ENCODE measurements at regions of chr19 and their contacts with region 1.

Region 1: DNA sequence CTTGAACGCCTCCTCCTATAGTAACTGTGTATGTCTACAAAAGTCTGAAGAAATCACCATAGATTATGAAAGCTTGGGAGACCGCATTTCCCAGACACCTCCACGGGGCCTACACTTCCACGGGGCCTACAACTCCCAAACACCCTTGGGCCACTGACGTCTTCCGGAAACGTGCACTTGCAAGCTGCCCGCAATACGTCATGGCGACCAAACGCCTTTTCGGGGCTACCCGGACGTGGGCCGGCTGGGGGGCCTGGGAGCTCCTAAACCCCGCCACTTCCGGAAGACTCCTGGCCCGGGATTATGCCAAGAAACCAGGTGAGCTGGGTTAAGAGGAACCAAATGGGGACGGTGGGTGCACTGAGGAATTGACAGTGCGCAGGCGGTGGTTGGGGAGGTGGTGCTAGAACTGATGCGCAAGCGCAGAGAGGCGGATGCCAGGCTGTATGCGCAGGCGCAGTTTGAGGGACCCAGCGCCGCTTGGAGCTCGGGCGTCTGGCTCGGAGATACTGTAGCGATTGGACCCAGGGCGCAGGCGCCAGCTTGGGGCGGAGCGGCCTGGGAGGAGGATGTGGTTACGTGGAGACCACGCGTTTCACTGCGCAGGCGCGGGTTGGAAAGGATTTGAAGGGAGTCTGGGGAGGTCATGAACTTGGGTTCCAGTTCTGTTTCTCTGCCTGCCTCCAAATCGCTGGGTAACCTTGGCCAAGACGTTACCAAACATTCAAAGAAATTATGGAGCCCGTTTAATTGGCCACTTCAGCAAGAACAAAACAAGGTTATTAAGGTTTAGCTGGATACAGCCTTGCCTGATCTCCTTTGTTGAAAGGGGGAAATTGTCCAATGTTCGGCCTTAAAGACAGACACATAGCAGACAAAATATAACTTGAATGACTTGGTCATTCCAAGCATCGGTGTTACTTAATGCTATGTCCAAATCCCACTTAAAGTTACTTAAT is at the start of gene MRPL54:
- DNase-seq: peak; percentile 100
- ATAC-seq: peak; percentile 86
- H3K4me3 Mint-ChIP-seq: peak within 1 kb of the TSS; percentile 95
- H3K27ac Mint-ChIP-seq: peak within 1 kb of the TSS; percentile 100
- H3K4me1 Mint-ChIP-seq: peaks cover 41% of the 10 kb centered on the region
- H3K27me3 Mint-ChIP-seq: peaks cover 3% of the 10 kb centered on the region
- total RNA-seq, gene MRPL54: 74.0 to 89.8 TPM

Region 2: DNA sequence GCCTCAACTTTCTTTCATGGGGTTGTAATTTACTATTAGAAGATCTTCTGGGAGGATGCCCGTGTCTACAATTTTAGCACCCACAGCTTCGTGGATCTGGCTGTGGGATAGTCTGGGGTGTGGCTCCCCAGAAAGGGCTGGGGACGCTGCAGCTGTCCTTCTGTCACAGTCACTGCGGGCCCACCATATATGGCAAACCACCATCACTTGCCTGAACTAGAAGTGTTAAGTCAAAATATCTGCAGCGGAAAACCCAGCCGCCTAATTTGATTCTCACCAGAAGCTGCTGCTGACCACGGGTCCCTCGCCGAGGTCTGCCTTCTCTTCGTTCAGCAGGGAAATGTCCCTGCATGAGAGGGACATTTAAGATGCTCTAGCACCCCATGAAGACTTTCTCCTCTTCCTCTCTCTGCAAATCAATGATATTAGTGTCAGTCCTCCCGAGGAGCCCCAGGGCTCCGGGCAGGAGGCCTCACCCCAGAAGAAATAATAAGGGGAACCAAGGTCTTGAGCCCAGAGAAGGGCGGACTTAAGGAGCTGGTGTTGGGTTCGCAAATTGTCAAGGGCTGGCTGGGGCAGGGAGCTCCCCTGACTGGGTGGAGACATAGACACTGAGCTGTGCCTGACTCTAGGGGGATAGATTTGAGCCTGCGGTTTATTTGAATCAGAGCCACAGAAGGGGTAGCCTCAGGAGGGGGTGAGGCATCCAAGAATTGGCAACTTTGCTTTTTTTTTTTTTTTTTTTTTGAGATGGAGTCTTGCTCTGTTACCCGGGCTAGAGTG is 26.4 kb after region 1 on chr19:
- CTCF ChIA-PET with region 1: interaction called, 21 read pairs
- DNase-seq: peak; percentile 77
- ATAC-seq: peak; percentile 67
- H3K4me3 Mint-ChIP-seq: peak overlapping the region; percentile 3
- H3K27ac Mint-ChIP-seq: peak overlapping the region; percentile 83
- H3K4me1 Mint-ChIP-seq: peaks cover 35% of the 10 kb centered on the region
- H3K27me3 Mint-ChIP-seq: peaks cover 7% of the 10 kb centered on the region

Region 3: DNA sequence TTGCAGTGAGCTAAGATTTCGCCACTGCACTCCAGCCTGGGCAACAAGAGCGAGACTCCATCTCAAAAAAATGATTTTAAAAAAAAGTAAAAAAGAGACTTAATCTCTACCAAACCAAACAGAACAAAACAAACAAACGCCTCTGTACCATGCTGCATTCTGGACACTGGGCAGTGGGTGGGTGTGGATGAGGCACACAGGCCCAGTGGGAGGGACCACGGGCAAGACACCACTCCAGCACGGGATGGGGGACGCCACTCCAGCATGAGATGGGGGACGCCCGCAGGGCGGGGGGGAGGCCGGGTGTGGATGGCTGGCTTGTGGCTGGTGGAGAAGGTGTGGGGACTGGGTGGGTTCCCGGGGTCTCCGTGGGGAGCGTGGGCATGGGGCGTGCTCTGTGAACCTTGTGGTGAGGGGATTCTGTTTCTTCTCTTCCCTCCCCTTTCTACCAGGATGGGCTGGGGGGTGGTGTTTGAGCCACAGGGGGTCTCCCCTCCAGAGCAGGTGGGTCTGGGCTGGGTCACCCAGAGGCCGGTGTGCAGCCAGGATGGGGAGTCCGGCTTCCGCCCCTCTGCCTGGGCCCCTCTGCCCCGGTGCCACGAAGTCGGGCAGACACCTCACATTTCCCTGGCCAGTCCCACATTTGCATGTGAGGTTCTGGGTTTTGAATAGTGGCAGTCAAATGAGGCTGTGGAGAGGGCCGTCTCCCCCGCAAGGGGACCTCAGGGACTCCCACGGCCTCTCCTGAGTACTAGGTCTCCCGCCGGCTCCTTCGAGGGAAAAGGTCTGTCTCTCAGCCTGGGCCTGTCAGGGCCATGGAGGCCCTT is 47.3 kb after region 1 on chr19:
- CTCF ChIA-PET with region 1: interaction called, 23 read pairs
- DNase-seq: no peak
- ATAC-seq: no peak
- H3K4me3 Mint-ChIP-seq: no peak overlapping the region
- H3K27ac Mint-ChIP-seq: no peak overlapping the region
- H3K4me1 Mint-ChIP-seq: peaks cover 50% of the 10 kb centered on the region
- H3K27me3 Mint-ChIP-seq: no peaks in the 10 kb centered on the region

Measured in activated CD8-positive, alpha-beta memory T cell treated with anti-CD3 and anti-CD28 coated beads, Interleukin-2, amount 10 ng/mL, durations not matched to agents 7 days and 5 days (primary cell).